Activated T-helper 2 cell treated with anti-CD3 and anti-CD28 coated beads, Interferon-gamma antibody, Interleukin-2, Interleukin-4, amounts not matched to agents 10 μg/mL and 5 μg/mL and 100 μg/mL, durations not matched to agents 14 hours and 24 hours and 36 hours (primary cell): ENCODE measurements at regions of chr7 and their contacts with region 1.

Region 1: DNA sequence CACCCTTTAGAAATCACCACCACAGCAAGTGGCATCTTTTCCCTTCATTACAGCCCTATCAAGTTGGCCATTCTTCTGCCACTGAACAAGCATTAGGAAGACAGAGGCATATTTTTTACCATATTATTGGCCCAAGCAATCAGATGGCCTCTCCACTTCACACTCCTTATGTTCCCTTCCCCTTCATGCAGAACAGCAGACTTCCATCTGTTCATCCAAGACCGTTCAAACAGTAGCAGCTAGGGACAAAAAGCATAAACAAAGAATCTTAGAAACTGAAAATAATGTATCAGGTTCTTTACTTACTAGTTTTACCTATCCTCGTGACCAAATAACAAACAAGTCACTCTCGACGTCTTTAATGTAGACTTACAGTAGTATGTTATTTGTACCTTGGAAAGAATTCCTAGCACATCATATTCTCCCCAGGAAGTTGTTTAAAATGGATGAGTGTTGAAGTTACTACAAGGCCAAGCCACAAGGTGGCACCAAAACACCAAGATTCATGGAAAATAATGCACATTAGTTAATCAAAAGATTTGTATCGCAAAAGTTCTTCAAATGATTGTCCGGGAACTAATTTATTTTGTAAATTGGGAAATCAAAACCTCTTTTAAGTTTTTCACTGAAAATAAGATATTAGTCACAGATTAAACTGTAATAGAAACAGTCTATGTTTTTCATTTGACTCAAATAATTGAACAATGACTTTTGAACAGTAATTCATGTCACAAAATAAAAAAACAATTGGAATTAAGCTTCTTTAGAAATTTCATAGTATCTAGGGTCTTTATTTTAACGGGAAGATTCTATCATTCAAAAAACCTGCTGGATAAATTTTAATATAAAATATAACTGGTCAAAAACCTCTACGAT is 112.1 kb downstream of the VPS41 start:
- DNase-seq: no peak
- H3K4me3 Mint-ChIP-seq: no peak overlapping the region
- H3K27ac Mint-ChIP-seq: no peak overlapping the region
- H3K4me1 Mint-ChIP-seq: no peaks in the 10 kb centered on the region
- H3K27me3 Mint-ChIP-seq: no peaks in the 10 kb centered on the region

Region 2: DNA sequence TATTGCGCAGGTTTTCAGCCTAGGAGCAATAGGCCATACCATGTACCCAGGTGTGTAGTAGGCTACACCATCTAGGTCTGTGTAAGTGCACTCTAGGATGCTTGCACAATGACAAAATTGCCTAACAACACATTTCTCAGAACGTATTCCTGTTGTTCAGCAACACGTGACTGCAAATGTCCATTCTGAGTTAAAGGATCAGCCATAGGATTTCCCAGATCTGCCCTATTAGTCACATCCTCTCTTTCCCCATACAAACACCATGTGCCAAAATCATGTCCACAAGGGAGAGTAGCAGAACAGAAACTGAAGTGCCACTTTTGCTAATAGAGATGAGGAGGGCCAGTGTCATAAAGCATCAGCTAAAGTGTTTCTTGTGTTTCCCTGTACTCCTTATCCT is 123.1 kb before region 1 on chr7:
- intact Hi-C with region 1: no loop called
- DNase-seq: no peak
- H3K4me3 Mint-ChIP-seq: no peak overlapping the region
- H3K27ac Mint-ChIP-seq: no peak overlapping the region
- H3K4me1 Mint-ChIP-seq: no peaks in the 10 kb centered on the region
- H3K27me3 Mint-ChIP-seq: peaks cover 2% of the 10 kb centered on the region

Region 3: DNA sequence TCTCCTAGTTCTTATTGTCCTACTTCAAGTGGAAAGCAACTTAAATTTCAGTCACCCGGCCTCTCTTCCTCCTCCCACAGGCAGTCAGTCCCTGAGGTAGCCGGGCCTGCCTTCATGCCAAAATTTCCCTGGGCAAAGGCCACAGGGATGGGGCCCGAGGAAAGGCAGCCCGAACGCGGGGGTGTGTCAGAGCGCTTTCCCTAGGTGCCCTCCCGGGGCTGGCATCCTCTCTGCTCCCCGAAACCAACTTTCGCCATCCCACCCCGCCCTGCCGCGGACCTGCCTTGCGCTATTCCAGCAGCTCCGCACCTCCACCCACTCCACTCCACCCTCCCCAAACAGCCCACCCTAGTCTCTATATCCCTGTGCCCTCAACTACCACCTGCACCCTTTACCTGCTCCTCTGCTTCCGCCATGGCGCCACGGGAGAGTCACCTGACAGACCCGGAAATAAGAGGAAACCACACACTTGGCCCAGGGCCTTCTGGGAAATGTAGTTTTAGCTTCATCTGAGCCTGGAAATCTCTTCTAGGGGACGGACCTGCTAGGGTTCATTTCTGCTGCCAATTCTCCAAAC is 112.0 kb after region 1 on chr7 and contains the start of gene VPS41:
- intact Hi-C with region 1: loop called (anchors 10 kb)
- DNase-seq: peak; percentile 72
- H3K4me3 Mint-ChIP-seq: peak within 1 kb of the TSS; percentile 92
- H3K27ac Mint-ChIP-seq: peak within 1 kb of the TSS; percentile 90
- H3K4me1 Mint-ChIP-seq: peaks cover 32% of the 10 kb centered on the region
- H3K27me3 Mint-ChIP-seq: peaks cover 8% of the 10 kb centered on the region
- total RNA-seq, gene VPS41: 59.9 and 63.6 TPM in 2 replicates

Region 4: GRCh38 chr7:38932509-38933168 is 135.8 kb after region 1 on chr7:
- intact Hi-C with region 1: loop called (anchors 5 kb)
- DNase-seq: peak; percentile 12
- H3K4me3 Mint-ChIP-seq: no peak overlapping the region
- H3K27ac Mint-ChIP-seq: no peak overlapping the region
- H3K4me1 Mint-ChIP-seq: peaks cover 2% of the 10 kb centered on the region
- H3K27me3 Mint-ChIP-seq: peaks cover 2% of the 10 kb centered on the region

Region 5: DNA sequence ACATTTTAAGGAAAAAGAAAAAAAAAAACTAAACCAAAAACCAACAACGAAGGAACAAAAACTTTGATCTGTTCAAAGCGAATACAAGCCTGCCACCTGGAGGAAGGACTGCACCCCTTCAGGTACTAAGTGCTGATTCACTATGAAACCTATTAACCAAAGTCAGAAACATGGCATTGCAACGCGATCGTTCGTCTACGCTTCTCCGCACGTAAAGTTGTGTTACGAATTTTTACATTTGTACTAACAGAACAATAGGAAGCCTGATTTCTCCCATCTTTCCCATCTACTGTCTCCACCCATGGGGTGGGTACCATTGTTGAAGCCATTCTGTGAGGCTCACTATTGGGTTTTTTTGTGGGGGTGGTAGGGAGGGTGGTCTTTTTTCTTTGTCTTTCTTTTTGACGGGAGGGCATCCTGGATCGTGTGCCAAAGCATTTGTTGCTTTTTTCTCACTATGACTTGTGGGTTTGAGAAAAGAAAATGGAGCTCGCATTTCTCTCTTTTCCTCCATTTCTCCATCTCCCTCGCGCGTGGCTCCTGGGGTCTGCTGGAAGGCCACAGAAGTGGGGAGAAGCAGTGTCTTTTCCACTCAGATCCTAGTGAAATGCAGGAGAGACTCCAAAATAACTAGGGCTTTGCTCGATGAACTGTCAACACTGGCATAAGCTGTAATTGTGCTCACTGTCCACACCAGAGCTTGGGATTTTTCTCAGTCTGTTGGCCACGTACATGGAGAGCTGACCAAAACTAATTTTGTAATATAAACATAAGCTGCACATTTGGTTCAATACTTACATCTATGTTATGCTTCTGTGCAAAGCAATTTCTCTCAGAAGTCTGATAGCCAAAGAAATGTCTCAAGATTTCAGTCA is 668.4 kb after region 1 on chr7:
- intact Hi-C with region 1: loop called (anchors 1 kb)
- DNase-seq: peak; percentile 14
- H3K4me3 Mint-ChIP-seq: no peak overlapping the region
- H3K27ac Mint-ChIP-seq: no peak overlapping the region
- H3K4me1 Mint-ChIP-seq: peaks cover 7% of the 10 kb centered on the region
- H3K27me3 Mint-ChIP-seq: peaks cover 25% of the 10 kb centered on the region

Region 6: DNA sequence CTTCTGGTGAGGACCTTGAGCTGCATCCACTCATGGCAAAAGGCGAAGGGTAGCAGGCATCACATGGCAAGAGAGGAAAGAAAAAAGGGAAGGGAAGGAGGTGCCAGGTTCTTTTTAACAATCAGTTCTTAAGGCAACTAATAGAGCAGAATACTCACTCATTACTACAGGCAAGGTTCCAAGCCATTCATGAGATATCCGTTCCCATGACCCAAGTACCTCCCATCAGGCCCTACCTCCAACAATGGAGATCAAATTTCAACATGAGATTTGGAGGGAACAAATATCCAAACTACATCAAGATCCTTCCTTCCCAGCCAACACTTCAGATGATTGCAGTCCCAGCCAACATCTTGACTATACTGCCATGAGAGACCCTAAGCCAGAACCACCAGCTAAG is 730.4 kb after region 1 on chr7:
- intact Hi-C with region 1: loop called (anchors 5 kb)
- DNase-seq: no peak
- H3K4me3 Mint-ChIP-seq: no peak overlapping the region
- H3K27ac Mint-ChIP-seq: no peak overlapping the region
- H3K4me1 Mint-ChIP-seq: no peaks in the 10 kb centered on the region
- H3K27me3 Mint-ChIP-seq: peaks cover 10% of the 10 kb centered on the region